WTC11 (cell line): ENCODE measurements at regions of chr1 and their contacts with region 1.

Region 1: DNA sequence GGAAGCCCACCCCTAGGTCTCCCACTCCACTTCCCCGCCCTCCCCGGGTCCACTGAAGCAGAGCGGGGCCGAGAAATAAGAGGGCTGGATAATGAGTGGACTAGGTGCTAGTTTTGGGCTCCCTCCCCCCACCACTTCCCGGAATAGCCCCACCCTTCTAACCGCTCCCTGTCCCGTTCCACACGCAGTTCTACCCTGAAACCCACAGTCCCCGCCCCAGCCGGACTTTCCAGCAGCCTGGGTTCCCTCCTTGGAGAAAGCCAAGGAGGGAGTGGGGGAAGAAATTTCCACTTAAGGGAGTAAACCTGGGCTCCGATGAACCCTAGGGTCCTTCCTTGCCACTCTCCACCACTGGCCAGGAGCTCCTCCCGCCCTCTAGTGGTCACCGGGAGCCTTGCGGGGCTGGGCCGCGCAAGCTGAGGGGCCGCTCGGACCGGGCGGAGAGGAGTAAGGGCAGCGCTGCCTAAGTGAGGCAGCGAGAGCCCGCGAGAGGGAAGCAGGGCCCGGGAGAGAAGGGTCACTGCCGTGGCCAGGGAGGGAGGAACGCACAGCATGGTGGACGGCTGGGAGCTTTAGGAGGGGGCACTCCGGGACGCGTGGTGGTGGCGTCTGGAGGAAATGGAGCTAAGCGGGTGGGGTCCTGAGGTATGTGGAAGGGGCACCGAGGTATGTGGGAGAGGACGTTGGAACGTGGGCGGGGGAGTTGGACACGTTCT is 14.3 kb downstream of the THBS3 start:
- DNase-seq: peak; percentile 97
- ATAC-seq: peak; percentile 67
- H3K4me3 Mint-ChIP-seq: peak overlapping the region; percentile 99
- H3K27ac Mint-ChIP-seq: peak overlapping the region; percentile 99
- H3K4me1 Mint-ChIP-seq: peaks cover 34% of the 10 kb centered on the region
- H3K27me3 Mint-ChIP-seq: peaks cover 4% of the 10 kb centered on the region; the same call in 1 of the 2 replicates
- CTCF ChIP-seq: peak; percentile 98

Region 2: GRCh38 chr1:155179112-155180031 is 14.1 kb before region 1 on chr1:
- CTCF ChIA-PET with region 1: interaction called, 232 read pairs
- POLR2A ChIA-PET with region 1: interaction called, 83 read pairs
- DNase-seq: no peak
- ATAC-seq: no peak
- H3K4me3 Mint-ChIP-seq: no peak overlapping the region
- H3K27ac Mint-ChIP-seq: no peak overlapping the region
- H3K4me1 Mint-ChIP-seq: peaks cover 21% of the 10 kb centered on the region
- H3K27me3 Mint-ChIP-seq: no peaks in the 10 kb centered on the region
- CTCF ChIP-seq: no peak

Region 3: DNA sequence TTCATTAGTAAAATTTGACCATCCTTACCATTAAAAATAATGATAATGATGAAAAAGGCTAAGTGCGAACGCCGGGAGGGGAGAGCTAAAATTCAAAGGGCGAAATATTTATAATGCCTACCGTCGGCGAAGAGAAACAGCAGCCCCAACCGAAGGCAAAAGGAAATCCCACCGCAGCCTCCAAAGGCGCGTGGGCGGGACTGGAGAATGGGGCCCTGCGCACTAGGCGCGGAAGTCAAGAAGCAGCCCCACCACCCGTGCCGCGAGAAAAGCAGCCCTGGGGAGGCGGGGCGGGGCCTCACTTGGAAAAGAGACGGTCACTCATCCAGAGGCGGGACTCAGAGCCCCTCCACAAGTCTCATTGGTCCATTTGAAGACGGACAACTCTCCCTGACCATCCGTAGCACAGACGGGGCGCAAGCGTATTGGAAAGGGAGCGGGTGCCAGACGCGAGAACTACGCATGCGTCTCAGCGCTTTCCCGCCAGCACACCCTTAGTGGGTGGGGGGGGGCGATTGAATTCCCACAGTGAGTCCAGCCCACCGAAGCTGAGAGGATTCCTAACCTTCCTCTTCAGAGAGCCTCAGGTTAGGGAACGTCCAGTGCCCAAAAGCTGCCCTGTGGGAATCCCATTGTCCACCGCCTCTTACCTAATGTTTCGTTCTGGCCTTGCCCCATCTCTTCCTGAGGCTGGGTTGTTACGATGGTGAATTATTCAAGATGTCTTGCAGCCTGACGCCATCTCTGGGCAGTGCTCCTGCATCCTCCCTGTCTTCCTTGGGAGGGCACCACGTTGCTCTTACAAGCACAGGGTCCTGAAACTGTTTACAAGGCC is 34.0 kb after region 1 on chr1:
- CTCF ChIA-PET with region 1: interaction called, 19 read pairs
- POLR2A ChIA-PET with region 1: interaction called, 5 read pairs
- DNase-seq: peak; percentile 97
- ATAC-seq: peak; percentile 96
- H3K4me3 Mint-ChIP-seq: peak overlapping the region; percentile 92
- H3K27ac Mint-ChIP-seq: peak overlapping the region; percentile 97
- H3K4me1 Mint-ChIP-seq: peaks cover 22% of the 10 kb centered on the region
- H3K27me3 Mint-ChIP-seq: peaks cover 29% of the 10 kb centered on the region
- CTCF ChIP-seq: no peak